ENCODE measurements at regions of chr2 and their contacts with region 1.

Region 1: DNA sequence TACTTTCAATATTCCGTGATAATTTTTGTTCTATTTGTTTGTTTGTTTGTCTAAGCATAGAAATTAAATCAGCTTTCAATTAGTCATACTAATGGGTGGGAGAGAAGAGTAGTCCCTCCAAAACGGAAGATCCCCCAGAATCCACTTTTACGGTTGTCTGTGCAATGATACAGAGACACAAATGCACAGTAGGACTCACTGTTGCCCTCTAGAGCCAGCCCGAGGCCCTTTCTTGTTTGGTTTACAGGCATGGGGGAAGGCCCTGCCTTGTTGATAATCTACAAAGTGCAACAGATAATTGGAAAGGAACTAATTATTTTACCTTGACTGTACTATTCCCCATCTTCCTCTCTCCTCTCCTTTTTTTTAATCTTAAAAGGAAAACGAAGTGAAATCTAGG is 121.1 kb downstream of the ACOXL start:
- DNase-seq: peak; percentile 67
- H3K4me3 ChIP-seq: no peak overlapping the region
- H3K27ac ChIP-seq: no peak overlapping the region
- H3K4me1 ChIP-seq: peaks cover 23% of the 10 kb centered on the region
- CTCF ChIP-seq: peak; percentile 91

Region 2: DNA sequence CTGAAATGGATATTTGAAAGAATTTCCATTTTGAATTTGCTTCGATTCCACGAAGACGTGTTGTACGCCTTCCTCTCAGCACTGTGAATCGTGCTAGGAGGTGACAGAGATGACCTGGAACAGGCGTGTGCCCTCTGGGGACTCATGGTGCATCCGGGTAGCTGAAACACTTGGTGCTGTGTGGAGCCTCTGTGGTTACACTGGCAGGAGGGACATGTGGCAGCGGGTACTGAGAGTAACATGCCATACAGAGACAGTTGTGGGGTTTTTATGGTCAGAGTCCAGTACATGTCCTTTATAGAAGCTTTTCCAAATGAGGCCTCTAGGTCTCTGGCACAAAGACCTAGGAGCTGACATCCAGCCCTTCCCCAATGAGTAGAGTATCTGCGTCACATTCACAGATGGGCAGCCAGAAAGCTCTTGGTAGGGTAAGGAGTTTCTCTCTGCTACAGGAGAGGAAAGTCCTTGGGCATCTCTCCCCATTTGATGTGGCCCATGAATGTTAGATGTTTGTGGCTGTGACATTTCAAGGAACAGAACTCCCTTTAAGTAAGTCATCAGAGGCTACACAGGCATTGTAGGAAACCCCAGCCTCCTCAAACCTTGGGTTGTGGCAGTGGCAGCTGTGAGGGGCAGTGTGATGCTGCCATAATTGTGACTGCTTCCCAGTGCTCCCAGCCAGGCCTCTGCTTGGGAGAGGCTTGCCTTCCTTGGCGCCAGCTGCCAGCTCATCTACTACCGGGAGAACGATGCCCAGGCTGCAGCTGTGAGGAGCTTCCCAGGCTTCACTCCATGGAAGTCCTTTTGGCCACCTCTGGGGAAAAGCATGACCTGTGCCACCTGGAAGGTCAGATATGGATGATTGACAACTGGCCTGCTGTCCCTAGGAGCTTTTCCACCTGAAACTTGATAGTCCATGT is 40.5 kb before region 1 on chr2:
- CTCF ChIA-PET with region 1: no interaction called
- POLR2A ChIA-PET with region 1: no interaction called
- intact Hi-C with region 1: loop called (anchors 5 kb)
- DNase-seq: no peak
- H3K4me3 ChIP-seq: no peak overlapping the region
- H3K27ac ChIP-seq: no peak overlapping the region
- H3K4me1 ChIP-seq: peaks cover 12% of the 10 kb centered on the region
- CTCF ChIP-seq: no peak

Measured in OCI-LY7 (cell line).